ENCODE measurements at regions of chr17 and their contacts with region 1.

Region 1: DNA sequence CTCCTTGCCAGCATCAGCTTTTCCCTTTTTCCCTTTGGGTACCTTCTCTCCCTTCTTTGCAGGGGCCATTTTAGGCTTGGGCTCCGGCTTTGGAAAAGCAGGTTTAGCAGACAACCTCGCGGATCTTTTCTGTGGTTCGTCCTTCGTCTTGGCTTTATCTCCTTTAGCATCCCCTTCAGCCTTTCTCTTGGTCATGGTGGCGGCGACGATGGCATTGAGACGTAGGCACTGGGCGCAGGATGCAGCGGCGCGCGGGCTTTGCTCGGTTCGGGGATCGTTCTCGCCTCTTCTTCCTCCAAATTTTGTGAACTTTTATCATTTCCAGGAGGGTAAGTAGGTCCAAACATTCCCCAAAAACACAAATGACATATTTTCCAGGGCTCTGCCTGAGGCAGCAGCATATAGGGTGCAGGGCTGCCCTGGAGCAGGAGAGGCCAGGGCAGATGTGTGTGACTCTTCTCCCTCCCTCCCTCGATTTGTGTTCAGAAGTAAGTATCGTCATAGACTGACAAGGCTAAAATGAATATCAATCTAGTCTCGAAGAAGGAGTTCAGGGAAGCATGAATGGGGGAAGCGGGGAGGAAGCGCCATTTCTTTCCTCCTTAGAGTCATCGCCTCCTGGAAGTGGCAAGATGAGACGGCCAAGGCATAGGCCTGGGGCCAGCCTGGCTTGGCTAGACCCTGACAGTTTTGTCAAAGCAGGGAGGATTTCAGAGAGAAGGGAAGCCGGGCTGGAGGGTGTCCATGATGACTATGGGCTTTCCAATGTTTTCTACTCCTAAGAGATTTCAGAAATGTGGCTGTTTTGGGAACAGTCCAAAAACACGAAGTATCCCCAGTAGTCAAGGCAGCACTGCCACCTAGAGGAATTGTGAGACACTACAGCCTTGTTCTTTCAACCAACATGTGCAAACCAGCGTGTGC is 13.2 kb downstream of the CHCT1 start:
- DNase-seq: peak; percentile 93
- H3K4me3 ChIP-seq: no peak overlapping the region
- H3K27ac ChIP-seq: no peak overlapping the region
- H3K4me1 ChIP-seq: peaks cover 5% of the 10 kb centered on the region
- H3K27me3 ChIP-seq: no peaks in the 10 kb centered on the region
- CTCF ChIP-seq: peak; percentile 90

Region 2: DNA sequence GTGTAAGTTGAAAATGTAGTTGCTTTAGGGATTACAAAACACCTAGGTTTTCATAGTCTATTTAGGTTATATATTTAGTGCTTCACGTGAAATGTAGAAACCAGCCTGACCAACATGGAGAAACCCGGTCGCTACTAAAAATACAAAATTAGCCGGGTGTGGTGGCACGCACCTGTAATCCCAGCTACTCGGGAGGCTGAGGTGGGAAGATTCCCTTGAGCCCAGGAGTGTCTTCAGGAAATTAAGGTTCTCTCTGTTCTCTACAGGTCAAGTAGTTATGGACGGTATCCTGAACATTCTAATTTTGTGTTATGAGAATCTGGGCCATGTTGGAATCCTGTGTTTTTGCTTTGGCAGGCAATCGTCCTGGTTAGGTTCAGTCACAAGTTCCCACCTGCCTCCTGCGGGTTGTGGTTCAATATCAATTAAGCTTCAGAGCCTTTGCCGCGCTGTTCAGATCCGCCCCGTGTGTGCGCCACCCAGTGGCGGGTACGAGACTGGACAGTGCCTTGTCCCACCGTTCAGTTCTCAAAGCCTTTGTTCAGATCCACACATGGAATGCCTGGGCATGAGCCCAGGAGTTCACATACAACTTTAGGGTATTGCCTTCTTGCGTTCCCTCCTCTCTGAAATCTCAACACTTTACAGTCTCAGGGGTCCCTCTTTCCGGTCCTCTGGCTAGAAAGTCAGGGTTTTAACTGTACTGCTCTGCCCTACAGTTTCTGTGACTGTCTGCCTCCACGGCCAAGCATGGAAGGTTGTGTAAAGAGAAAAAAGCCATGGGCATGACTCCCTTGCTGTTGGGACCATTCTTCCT is 398.5 kb before region 1 on chr17:
- CTCF ChIA-PET with region 1: no interaction called
- POLR2A ChIA-PET with region 1: no interaction called
- intact Hi-C with region 1: loop called (anchors 10 kb)
- DNase-seq: peak; percentile 88
- H3K4me3 ChIP-seq: no peak overlapping the region
- H3K27ac ChIP-seq: no peak overlapping the region
- H3K4me1 ChIP-seq: no peaks in the 10 kb centered on the region
- H3K27me3 ChIP-seq: no peaks in the 10 kb centered on the region
- CTCF ChIP-seq: peak; percentile 99

Region 3: GRCh38 chr17:60102632-60103096 is 332.8 kb before region 1 on chr17:
- CTCF ChIA-PET with region 1: no interaction called
- POLR2A ChIA-PET with region 1: no interaction called
- intact Hi-C with region 1: loop called (anchors 10 kb)
- DNase-seq: no peak
- H3K4me3 ChIP-seq: no peak overlapping the region
- H3K27ac ChIP-seq: no peak overlapping the region
- H3K4me1 ChIP-seq: no peaks in the 10 kb centered on the region
- H3K27me3 ChIP-seq: no peaks in the 10 kb centered on the region
- CTCF ChIP-seq: no peak

Region 4: GRCh38 chr17:60142872-60143499 is 292.5 kb before region 1 on chr17:
- CTCF ChIA-PET with region 1: no interaction called
- POLR2A ChIA-PET with region 1: no interaction called
- intact Hi-C with region 1: loop called (anchors 10 kb)
- DNase-seq: peak; percentile 94
- H3K4me3 ChIP-seq: peak overlapping the region; percentile 36
- H3K27ac ChIP-seq: no peak overlapping the region
- H3K4me1 ChIP-seq: peaks cover 9% of the 10 kb centered on the region
- H3K27me3 ChIP-seq: peaks cover 43% of the 10 kb centered on the region
- CTCF ChIP-seq: peak; percentile 91

Region 5: DNA sequence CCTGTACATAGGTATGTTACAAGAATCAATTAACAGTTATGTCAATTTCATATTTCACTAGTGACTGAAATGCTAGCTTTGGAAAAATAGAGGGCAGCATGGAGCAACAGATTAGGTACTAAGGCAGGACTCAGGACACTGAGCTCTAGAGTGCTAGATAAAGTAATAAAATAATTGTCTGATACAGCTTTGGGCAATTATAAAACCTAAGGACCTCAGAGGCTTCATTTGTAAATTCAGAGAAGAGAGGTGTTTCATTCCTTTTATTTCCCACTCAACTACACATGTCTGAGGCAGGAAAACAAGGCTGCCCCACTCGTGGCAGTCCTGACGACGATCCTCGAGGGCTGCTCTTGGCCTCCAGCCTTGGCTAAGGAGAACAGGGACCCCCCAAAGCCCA is 204.3 kb before region 1 on chr17:
- CTCF ChIA-PET with region 1: no interaction called
- POLR2A ChIA-PET with region 1: no interaction called
- intact Hi-C with region 1: loop called (anchors 5 kb)
- DNase-seq: peak; percentile 64
- H3K4me3 ChIP-seq: peak overlapping the region; percentile 15
- H3K27ac ChIP-seq: peak overlapping the region; percentile 13
- H3K4me1 ChIP-seq: peaks cover 9% of the 10 kb centered on the region
- H3K27me3 ChIP-seq: no peaks in the 10 kb centered on the region
- CTCF ChIP-seq: peak; percentile 71

Region 6: GRCh38 chr17:60421273-60421934 is 14.1 kb before region 1 on chr17:
- CTCF ChIA-PET with region 1: no interaction called
- POLR2A ChIA-PET with region 1: no interaction called
- intact Hi-C with region 1: no loop called
- DNase-seq: peak; percentile 90
- H3K4me3 ChIP-seq: peak overlapping the region; percentile 54
- H3K27ac ChIP-seq: peak overlapping the region; percentile 73
- H3K4me1 ChIP-seq: no peaks in the 10 kb centered on the region
- H3K27me3 ChIP-seq: no peaks in the 10 kb centered on the region
- CTCF ChIP-seq: peak; percentile 99

Region 7: GRCh38 chr17:60468371-60468770 is 32.9 kb after region 1 on chr17:
- CTCF ChIA-PET with region 1: no interaction called
- POLR2A ChIA-PET with region 1: no interaction called
- intact Hi-C with region 1: no loop called
- DNase-seq: no peak
- H3K4me3 ChIP-seq: no peak overlapping the region
- H3K27ac ChIP-seq: no peak overlapping the region
- H3K4me1 ChIP-seq: peaks cover 13% of the 10 kb centered on the region
- H3K27me3 ChIP-seq: no peaks in the 10 kb centered on the region
- CTCF ChIP-seq: no peak

Region 8: DNA sequence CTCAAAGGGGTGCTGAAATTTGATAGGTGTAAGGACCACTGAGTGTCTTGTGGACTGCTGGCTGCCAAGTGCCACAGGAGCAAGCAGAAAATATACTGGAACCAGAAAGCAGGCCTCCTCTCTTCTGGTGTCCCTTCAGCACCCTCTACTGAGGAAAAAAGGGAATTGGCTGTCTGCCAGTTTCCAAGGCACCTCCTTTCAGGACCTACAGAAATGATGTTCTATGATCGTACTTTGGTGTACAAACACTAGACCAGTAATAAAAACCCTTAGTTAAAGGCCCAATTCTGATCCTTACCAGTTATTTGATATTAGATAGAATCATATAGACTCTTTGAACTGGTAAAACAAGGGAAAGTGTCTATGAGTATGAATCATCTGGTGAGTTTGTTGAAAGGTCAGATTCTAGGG is 206.3 kb after region 1 on chr17:
- CTCF ChIA-PET with region 1: no interaction called
- POLR2A ChIA-PET with region 1: no interaction called
- intact Hi-C with region 1: loop called (anchors 2 kb)
- DNase-seq: peak; percentile 90
- H3K4me3 ChIP-seq: no peak overlapping the region
- H3K27ac ChIP-seq: no peak overlapping the region
- H3K4me1 ChIP-seq: peaks cover 7% of the 10 kb centered on the region
- H3K27me3 ChIP-seq: no peaks in the 10 kb centered on the region
- CTCF ChIP-seq: peak; percentile 61

Measured in A673 (cell line).